Heart left ventricle (tissue), 16 donors: ENCODE measurements at regions of chr19 and their contacts with region 1.

Region 1: GRCh38 chr19:39310558-39311311 is 9.9 kb downstream of the LRFN1 start:
- DNase-seq: no peak
- ATAC-seq: no peak
- H3K4me3 ChIP-seq: no peak overlapping the region
- H3K27ac ChIP-seq: no peak overlapping the region
- H3K4me1 ChIP-seq: peaks cover 0 to 19% (median 1%) of the 10 kb centered on the region in 12 donors
- H3K27me3 ChIP-seq: peaks cover 16 to 31% (median 23%) of the 10 kb centered on the region in 9 donors
- CTCF ChIP-seq: no peak
- POLR2A ChIP-seq: no peak

Region 2: GRCh38 chr19:39199025-39199424 is 111.7 kb before region 1 on chr19:
- intact Hi-C with region 1: loop called in 2 of 10 experiments (anchors 10 kb)
- DNase-seq: peak in 1 of 5 donors; percentile 38
- ATAC-seq: peak in 3 of 4 donors; percentile 34 to 66 (median 63)
- H3K4me3 ChIP-seq: no peak overlapping the region
- H3K27ac ChIP-seq: no peak overlapping the region
- H3K4me1 ChIP-seq: peaks cover 0 to 9% (median 0%) of the 10 kb centered on the region in 12 donors
- H3K27me3 ChIP-seq: peaks cover 25 to 99% (median 79%) of the 10 kb centered on the region in 9 donors
- CTCF ChIP-seq: no peak
- POLR2A ChIP-seq: no peak

Region 3: DNA sequence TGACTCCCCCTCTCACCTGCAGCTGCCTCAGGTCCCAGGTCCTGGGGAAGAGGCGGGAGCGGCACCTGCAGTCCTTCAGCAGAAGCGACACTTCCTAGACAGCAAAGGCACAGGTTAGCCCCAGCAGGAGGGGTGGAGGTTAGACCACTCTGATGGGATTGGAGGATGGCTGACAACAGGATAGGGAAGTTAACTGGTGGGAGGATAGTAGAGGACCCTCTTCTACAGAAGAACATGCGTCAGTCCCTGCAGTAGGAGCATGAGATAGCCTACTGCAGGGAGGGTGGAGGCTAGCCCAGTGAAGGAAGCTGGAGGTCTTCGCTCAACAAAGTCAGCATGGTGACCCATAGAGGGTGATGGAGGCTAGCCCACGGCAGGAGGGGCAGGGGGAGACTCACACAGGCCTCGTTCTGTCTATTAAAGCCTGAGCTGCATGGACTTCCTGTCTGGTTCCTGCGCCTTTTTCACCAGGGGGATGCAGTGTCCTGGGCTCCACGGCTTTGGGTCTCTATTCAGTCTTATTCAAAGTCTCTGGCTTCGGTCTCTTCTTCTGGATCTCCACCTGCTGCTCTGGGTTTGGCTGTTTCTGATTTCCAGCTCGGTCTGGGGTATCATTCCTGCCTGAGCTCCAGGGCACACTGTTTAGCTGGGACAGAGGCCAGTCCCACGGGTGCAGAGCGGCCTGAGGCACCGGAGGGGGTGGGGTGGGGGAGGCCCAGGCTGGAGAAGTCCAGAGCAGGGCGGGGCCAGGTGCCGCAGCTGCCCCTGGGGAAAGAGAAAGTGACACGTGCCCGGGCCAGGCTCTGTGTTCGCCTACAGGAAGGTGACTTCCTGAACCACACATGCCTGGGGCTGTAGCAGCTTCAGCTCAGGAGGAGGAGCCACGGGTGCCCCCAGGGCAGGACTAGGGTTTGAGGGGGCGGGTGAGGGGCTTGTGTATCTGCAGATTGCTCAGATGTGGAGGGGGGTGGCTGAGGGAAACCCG is 73.2 kb before region 1 on chr19:
- intact Hi-C with region 1: no loop called
- DNase-seq: no peak
- ATAC-seq: peak in 1 of 4 donors; percentile 59
- H3K4me3 ChIP-seq: no peak overlapping the region
- H3K27ac ChIP-seq: no peak overlapping the region
- H3K4me1 ChIP-seq: peaks cover 0 to 6% (median 0%) of the 10 kb centered on the region in 12 donors
- H3K27me3 ChIP-seq: peaks cover 0 to 56% (median 4%) of the 10 kb centered on the region in 9 donors
- CTCF ChIP-seq: no peak
- POLR2A ChIP-seq: no peak